ENCODE measurements at regions of chr16 and their contacts with region 1.

Region 1: GRCh38 chr16:84504420-84505248 is at the start of gene MEAK7:
- DNase-seq: peak; percentile 99
- H3K4me3 Mint-ChIP-seq: peak within 1 kb of the TSS; percentile 84
- H3K27ac Mint-ChIP-seq: peak within 1 kb of the TSS; percentile 88
- H3K4me1 Mint-ChIP-seq: peaks cover 52% of the 10 kb centered on the region
- H3K27me3 Mint-ChIP-seq: no peaks in the 10 kb centered on the region
- CTCF ChIP-seq: no peak
- total RNA-seq, gene MEAK7: 62.3 and 66.8 TPM in 2 replicates

Region 2: DNA sequence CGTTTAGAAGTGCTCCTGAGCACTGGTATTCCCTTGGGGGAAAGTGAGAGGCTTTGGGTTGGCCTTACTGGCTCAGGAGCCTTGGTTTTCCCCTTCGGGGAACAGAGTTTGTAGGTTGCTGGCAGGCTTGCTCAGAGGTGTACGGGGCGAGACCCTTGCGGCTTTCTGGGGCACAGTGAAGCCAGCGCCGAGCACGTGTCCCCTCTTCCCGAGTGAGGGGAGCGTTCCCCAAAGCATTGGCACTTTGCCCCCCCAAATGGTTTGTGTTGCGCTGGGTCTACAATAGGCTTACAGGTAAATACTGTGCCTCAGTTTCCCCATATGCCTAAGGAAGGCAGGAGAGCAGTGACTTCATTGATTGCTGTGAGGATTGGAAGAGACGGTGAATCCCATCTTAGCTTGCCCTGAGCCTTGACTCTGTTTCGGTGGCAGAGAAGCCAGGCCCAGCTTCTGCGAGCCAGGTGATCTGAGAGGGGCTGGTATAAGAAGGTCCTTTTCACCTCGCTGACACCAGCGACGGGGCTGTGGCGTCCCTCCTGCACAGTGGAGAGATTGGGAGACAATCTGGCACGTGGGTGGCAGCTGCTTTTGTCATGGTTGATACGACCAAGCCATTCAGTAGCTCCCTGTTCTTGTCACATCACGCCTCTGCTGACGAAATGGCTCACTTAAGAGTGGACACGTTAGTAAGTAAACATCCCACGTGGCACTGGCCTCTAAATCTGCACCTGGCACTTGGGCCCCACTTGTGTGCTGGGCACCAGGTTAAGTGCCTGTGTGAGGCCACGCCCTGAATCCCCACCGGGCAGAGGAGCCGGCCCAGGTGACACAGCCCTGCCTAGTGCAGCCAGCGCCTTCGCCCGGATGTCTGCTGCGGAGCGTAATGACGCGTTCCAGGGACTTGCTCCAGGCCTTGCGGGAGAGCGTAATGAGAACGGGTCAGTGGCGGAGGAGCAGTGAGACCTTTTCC is 55.2 kb before region 1 on chr16:
- CTCF ChIA-PET with region 1: no interaction called
- POLR2A ChIA-PET with region 1: no interaction called
- intact Hi-C with region 1: no loop called
- DNase-seq: no peak
- H3K4me3 Mint-ChIP-seq: no peak overlapping the region
- H3K27ac Mint-ChIP-seq: peak overlapping the region; percentile 63
- H3K4me1 Mint-ChIP-seq: no peaks in the 10 kb centered on the region
- H3K27me3 Mint-ChIP-seq: no peaks in the 10 kb centered on the region
- CTCF ChIP-seq: no peak

Region 3: GRCh38 chr16:84544031-84544773 is 39.6 kb after region 1 on chr16:
- CTCF ChIA-PET with region 1: interaction called, 11 read pairs
- POLR2A ChIA-PET with region 1: no interaction called
- intact Hi-C with region 1: no loop called
- DNase-seq: no peak
- H3K4me3 Mint-ChIP-seq: no peak overlapping the region
- H3K27ac Mint-ChIP-seq: no peak overlapping the region
- H3K4me1 Mint-ChIP-seq: no peaks in the 10 kb centered on the region
- H3K27me3 Mint-ChIP-seq: no peaks in the 10 kb centered on the region
- CTCF ChIP-seq: no peak

Measured in MCF 10A (cell line).